Activated CD4-positive, alpha-beta T cell treated with anti-CD3 and anti-CD28 coated beads for 36 hours (primary cell): ENCODE measurements at regions of chr5 and their contacts with region 1.

Region 1: DNA sequence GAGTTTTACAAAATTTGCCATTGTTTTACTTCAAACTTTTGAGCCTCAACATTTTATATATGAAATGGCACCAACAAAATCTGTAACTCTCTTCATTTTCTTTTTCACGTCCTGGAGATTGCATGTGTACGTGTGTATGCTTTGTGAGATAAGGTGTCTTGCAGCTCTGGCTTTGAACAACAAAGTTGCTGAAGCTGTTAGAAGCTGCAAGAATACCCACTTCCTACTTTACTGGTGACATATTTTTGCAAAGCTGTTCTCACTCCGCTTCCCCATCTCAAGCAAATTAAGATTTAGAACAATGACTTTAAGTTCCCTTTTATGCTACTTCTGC is 41.8 kb downstream of the FYB1 start:
- DNase-seq: no peak
- ATAC-seq: no peak
- H3K4me3 Mint-ChIP-seq: peak overlapping the region; percentile 59
- H3K27ac Mint-ChIP-seq: peak overlapping the region; percentile 80
- H3K4me1 Mint-ChIP-seq: peaks cover 94% of the 10 kb centered on the region
- H3K27me3 Mint-ChIP-seq: no peaks in the 10 kb centered on the region

Region 2: GRCh38 chr5:39114155-39114554 is 63.4 kb before region 1 on chr5:
- CTCF ChIA-PET with region 1: no interaction called
- POLR2A ChIA-PET with region 1: no interaction called
- intact Hi-C with region 1: no loop called
- DNase-seq: no peak
- ATAC-seq: no peak
- H3K4me3 Mint-ChIP-seq: no peak overlapping the region
- H3K27ac Mint-ChIP-seq: no peak overlapping the region
- H3K4me1 Mint-ChIP-seq: peaks cover 43% of the 10 kb centered on the region
- H3K27me3 Mint-ChIP-seq: no peaks in the 10 kb centered on the region

Region 3: DNA sequence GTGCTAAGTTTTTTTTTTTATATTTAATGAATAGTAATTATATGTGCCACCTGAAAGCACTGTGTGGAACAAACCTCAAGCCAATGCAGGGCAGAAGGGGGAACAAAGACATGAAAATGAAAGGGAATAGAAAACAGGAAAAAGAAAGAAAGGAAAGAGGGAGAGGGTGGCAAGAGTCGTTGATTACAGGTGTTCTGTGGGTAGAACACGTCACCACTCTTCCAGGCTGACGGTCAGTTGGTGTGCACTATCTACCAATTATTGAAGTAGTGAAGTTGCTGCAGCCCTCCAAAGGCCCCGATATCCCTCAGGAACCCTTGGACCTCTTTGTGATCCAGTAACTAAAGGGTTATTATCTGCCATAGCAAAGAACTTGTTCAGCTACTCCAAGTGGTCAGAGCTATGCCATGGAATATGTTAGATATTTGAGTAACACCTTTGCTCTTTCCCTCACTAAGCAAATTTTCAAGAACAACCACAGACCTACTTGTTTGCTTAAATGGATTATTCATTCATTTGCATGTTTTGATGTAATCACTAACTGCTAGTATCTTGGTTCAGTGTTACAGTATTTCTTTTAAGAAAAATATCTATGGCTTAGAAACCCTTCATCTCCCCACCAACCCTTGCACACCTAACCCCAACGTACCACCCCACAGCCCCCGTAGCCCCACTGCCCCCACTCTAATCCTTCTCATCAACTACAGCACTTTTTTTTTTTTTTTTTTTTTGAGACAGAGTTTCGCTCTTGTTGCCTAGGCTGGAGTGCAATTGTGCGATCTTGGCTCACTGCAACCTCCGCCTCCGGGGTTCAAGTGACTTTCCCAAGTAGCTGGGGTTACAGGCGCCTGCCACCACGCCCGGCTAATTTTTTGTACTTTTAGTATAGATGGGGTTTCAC is 10.5 kb after region 1 on chr5:
- CTCF ChIA-PET with region 1: interaction called, 18 read pairs
- POLR2A ChIA-PET with region 1: interaction called, 4 read pairs
- intact Hi-C with region 1: loop called (anchors 1 kb)
- DNase-seq: peak; percentile 45
- ATAC-seq: peak; percentile 38
- H3K4me3 Mint-ChIP-seq: peak overlapping the region; percentile 59
- H3K27ac Mint-ChIP-seq: peak overlapping the region; percentile 92
- H3K4me1 Mint-ChIP-seq: peaks cover 88% of the 10 kb centered on the region
- H3K27me3 Mint-ChIP-seq: no peaks in the 10 kb centered on the region

Region 4: DNA sequence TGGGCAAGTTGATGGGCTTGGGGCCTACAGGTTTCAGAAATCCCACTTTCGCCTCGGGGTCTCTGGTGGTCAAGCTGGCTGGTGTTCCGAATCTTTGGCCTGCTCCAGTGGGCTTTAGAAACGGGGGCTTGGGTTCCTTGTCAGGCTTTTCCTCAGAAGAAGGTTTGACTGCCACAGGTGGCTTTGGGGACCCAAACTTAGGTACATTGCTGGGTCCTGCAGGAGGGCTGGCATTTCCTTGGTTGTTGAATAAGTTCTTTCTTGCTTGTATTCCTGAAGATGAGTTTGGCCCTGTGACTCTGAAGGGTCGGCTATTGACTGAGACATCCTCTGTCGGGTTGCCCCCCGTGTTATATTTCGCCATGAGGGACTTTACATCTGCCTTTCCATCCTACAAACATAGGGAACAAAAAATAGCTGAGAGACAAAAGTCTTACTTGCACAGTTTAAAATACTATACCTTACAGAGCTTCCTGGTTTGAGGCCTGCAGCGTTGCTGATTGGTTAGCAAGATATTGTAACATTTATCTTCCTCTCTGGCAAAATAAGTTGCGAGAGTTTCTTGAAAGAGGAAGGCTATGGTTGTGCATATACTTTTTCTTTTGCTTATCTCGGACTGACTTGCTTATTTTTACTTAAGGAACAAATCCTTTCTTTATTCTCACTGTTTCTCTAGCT is 25.1 kb after region 1 on chr5:
- CTCF ChIA-PET with region 1: interaction called, 14 read pairs
- POLR2A ChIA-PET with region 1: interaction called, 3 read pairs
- intact Hi-C with region 1: loop called in 1 of 2 experiments (anchors 1 kb)
- DNase-seq: peak; percentile 62
- ATAC-seq: peak; percentile 27
- H3K4me3 Mint-ChIP-seq: peak overlapping the region; percentile 81
- H3K27ac Mint-ChIP-seq: peak overlapping the region; percentile 93
- H3K4me1 Mint-ChIP-seq: peaks cover 36% of the 10 kb centered on the region
- H3K27me3 Mint-ChIP-seq: no peaks in the 10 kb centered on the region

Region 5: DNA sequence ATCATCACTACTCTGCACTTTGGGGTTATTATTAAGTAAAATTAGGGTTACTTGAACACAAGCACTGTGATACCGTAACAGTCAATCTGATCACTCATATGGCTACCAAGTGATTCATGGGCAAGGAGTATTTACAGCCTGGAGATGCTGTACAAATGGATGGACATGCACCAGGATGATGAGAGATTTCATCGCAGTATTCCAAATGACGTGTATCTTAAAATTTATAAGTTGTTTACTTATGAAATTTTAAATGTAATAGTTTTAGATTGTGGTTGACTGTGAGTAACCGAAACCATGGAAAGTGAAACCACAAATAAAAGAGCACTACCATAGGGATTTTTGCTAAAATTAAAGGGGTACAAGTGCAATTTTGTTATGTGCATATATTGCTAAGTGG is 1040.0 kb after region 1 on chr5:
- CTCF ChIA-PET with region 1: no interaction called
- POLR2A ChIA-PET with region 1: no interaction called
- intact Hi-C with region 1: loop called in 1 of 2 experiments (anchors 10 kb)
- DNase-seq: no peak
- ATAC-seq: peak; percentile 52
- H3K4me3 Mint-ChIP-seq: no peak overlapping the region
- H3K27ac Mint-ChIP-seq: no peak overlapping the region
- H3K4me1 Mint-ChIP-seq: peaks cover 47% of the 10 kb centered on the region
- H3K27me3 Mint-ChIP-seq: peaks cover 3% of the 10 kb centered on the region